GM12878 (cell line): ENCODE measurements at regions of chr19 and their contacts with region 1.

Region 1: DNA sequence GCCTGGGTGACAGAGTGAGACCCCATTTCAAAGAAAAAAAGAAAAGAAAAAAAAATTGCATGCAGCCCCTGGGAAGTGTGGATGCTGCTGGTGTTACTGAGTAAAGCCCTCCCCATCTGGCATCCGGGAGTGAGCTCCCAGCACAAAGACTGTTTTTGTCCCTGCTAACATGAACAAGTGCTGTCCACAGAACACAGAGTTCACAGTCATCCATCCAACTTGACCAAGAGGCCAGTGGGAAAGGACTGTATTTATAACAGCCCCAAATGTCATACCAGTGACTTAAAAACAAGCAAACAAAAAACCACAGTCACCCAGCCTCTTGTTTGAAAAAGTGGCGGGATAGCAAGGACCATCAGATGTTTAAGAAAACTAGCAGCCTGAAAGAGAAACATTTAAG is 10.8 kb downstream of the FBXO17 start:
- DNase-seq: no peak
- ATAC-seq: no peak
- H3K4me3 ChIP-seq: no peak overlapping the region
- H3K27ac ChIP-seq: no peak overlapping the region
- H3K4me1 ChIP-seq: no peaks in the 10 kb centered on the region
- H3K27me3 ChIP-seq: no peaks in the 10 kb centered on the region
- CTCF ChIP-seq: no peak
- EP300 ChIP-seq: no peak
- POLR2A ChIP-seq: no peak
- RAD21 ChIP-seq: no peak

Region 2: GRCh38 chr19:38851622-38852230 is 113.0 kb before region 1 on chr19:
- CTCF ChIA-PET with region 1: no interaction called
- POLR2A ChIA-PET with region 1: no interaction called
- RAD21 ChIA-PET with region 1: no interaction called
- SMC1A ChIA-PET with region 1: no interaction called
- in situ Hi-C with region 1: no loop called
- intact Hi-C with region 1: no loop called
- DNase-seq: no peak
- ATAC-seq: peak; percentile 28
- H3K4me3 ChIP-seq: peak overlapping the region; percentile 96
- H3K27ac ChIP-seq: peak overlapping the region; percentile 91
- H3K4me1 ChIP-seq: peaks cover 11% of the 10 kb centered on the region
- H3K27me3 ChIP-seq: no peaks in the 10 kb centered on the region
- CTCF ChIP-seq: no peak
- EP300 ChIP-seq: no peak
- POLR2A ChIP-seq: peak; percentile 77
- RAD21 ChIP-seq: no peak

Region 3: GRCh38 chr19:38899447-38900219 is 65.1 kb before region 1 on chr19 and contains the starts of genes NFKBIB and SIRT2:
- CTCF ChIA-PET with region 1: no interaction called
- POLR2A ChIA-PET with region 1: no interaction called
- RAD21 ChIA-PET with region 1: no interaction called
- SMC1A ChIA-PET with region 1: no interaction called
- in situ Hi-C with region 1: no loop called
- intact Hi-C with region 1: no loop called
- DNase-seq: peak; percentile 99
- ATAC-seq: peak; percentile 96
- H3K4me3 ChIP-seq: peak within 1 kb of the TSS; percentile 90
- H3K27ac ChIP-seq: peak within 1 kb of the TSS; percentile 75
- H3K4me1 ChIP-seq: peaks cover 5% of the 10 kb centered on the region
- H3K27me3 ChIP-seq: no peaks in the 10 kb centered on the region
- CTCF ChIP-seq: no peak
- EP300 ChIP-seq: no peak
- POLR2A ChIP-seq: peak; percentile 79
- RAD21 ChIP-seq: no peak
- polyA plus RNA-seq, gene NFKBIB: 1.2 to 4.3 TPM
- polyA plus RNA-seq, gene SIRT2: 1.4 to 5.1 TPM

Region 4: GRCh38 chr19:39031368-39032062 is 66.8 kb after region 1 on chr19:
- CTCF ChIA-PET with region 1: interaction called, 51 read pairs
- POLR2A ChIA-PET with region 1: interaction called, 10 read pairs
- RAD21 ChIA-PET with region 1: interaction called, 5 read pairs
- SMC1A ChIA-PET with region 1: interaction called, 33 read pairs
- in situ Hi-C with region 1: no loop called
- intact Hi-C with region 1: no loop called
- DNase-seq: peak; percentile 60
- ATAC-seq: peak; percentile 94
- H3K4me3 ChIP-seq: peak overlapping the region; percentile 72
- H3K27ac ChIP-seq: no peak overlapping the region
- H3K4me1 ChIP-seq: peaks cover 6% of the 10 kb centered on the region; the same call in 1 of the 2 replicates
- H3K27me3 ChIP-seq: no peaks in the 10 kb centered on the region
- CTCF ChIP-seq: no peak
- EP300 ChIP-seq: no peak
- POLR2A ChIP-seq: no peak; the same call in 1 of the 2 replicates
- RAD21 ChIP-seq: no peak

Region 5: DNA sequence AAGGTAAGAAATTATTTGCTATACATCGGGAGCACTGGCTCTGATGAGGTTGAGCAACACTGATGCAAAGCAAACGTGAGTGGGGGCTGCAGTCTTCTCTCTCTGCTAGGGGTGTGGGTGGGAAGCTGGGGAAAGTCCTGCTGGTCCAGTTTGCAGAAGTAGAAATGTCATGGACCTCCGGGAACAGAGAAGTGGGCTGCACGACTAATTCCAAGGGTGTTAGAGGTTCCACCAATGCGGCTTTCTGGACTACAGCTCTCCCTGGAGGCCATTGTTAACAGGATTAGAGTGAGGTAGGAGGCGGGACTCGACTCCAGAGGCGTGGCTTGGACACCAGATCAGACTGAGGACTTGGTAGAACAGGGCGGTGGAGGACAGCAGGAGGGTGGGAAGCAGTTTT is 73.4 kb after region 1 on chr19:
- CTCF ChIA-PET with region 1: interaction called, 51 read pairs
- POLR2A ChIA-PET with region 1: interaction called, 7 read pairs
- RAD21 ChIA-PET with region 1: interaction called, 30 read pairs
- SMC1A ChIA-PET with region 1: interaction called, 33 read pairs
- in situ Hi-C with region 1: no loop called
- intact Hi-C with region 1: loop called (anchors 2 kb)
- DNase-seq: no peak
- ATAC-seq: peak; percentile 88
- H3K4me3 ChIP-seq: no peak overlapping the region
- H3K27ac ChIP-seq: no peak overlapping the region
- H3K4me1 ChIP-seq: no peaks in the 10 kb centered on the region
- H3K27me3 ChIP-seq: no peaks in the 10 kb centered on the region
- CTCF ChIP-seq: peak in 1 of 3 experiments; percentile 42; a peak in 2 of 6 replicates
- EP300 ChIP-seq: no peak
- POLR2A ChIP-seq: no peak
- RAD21 ChIP-seq: peak; percentile 62

Region 6: GRCh38 chr19:39052243-39052746 is 87.6 kb after region 1 on chr19:
- CTCF ChIA-PET with region 1: interaction called, 12 read pairs
- POLR2A ChIA-PET with region 1: no interaction called
- RAD21 ChIA-PET with region 1: interaction called, 13 read pairs
- SMC1A ChIA-PET with region 1: interaction called, 5 read pairs
- in situ Hi-C with region 1: no loop called
- intact Hi-C with region 1: no loop called
- DNase-seq: no peak
- ATAC-seq: peak; percentile 97
- H3K4me3 ChIP-seq: no peak overlapping the region
- H3K27ac ChIP-seq: no peak overlapping the region
- H3K4me1 ChIP-seq: no peaks in the 10 kb centered on the region
- H3K27me3 ChIP-seq: no peaks in the 10 kb centered on the region; a peak in 1 of 4 replicates
- CTCF ChIP-seq: peak; percentile 59 to 93 (median 79)
- EP300 ChIP-seq: no peak
- POLR2A ChIP-seq: no peak
- RAD21 ChIP-seq: peak; percentile 53

Region 7: DNA sequence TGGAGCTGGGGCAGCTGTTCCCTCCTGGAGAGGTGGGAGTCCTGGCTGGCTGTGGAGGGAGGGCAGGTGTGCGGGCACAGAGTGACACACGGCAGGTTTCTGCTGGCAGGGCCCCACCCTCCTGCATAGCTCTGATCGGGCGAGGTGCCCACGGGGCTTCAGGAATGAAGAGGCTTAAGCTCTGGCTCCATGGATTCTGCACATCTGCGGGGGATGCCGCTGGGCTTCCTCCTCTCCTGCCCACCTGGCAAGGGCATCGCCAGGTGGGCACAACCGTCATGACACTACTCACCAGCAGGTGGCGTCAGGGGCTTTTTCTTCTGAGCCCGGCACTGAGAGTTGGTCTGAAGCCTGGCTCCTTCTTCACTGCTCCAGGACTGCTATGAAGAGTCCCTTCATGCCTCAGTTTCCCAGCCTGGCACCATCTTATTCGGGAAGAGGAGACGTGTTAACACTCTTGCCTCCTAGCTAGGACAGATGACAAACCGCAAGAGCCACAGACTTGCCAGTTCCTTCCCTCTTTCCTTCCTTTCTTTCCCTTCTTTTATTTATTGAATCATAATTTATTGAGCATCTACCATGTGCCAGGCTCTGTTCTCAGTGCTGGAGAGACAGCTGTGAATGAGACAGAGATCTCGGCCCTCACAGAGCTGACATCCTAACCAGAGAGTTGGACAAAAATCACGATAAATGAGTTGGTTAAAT is 145.7 kb after region 1 on chr19:
- CTCF ChIA-PET with region 1: interaction called, 20 read pairs
- POLR2A ChIA-PET with region 1: no interaction called
- RAD21 ChIA-PET with region 1: interaction called, 6 read pairs
- SMC1A ChIA-PET with region 1: interaction called, 3 read pairs
- in situ Hi-C with region 1: no loop called
- intact Hi-C with region 1: loop called (anchors 5 kb)
- DNase-seq: no peak
- ATAC-seq: peak; percentile 97
- H3K4me3 ChIP-seq: no peak overlapping the region
- H3K27ac ChIP-seq: no peak overlapping the region
- H3K4me1 ChIP-seq: no peaks in the 10 kb centered on the region
- H3K27me3 ChIP-seq: no peaks in the 10 kb centered on the region; a peak in 1 of 4 replicates
- CTCF ChIP-seq: peak; percentile 78 to 85 (median 84)
- EP300 ChIP-seq: no peak
- POLR2A ChIP-seq: no peak
- RAD21 ChIP-seq: peak; percentile 65

Region 8: DNA sequence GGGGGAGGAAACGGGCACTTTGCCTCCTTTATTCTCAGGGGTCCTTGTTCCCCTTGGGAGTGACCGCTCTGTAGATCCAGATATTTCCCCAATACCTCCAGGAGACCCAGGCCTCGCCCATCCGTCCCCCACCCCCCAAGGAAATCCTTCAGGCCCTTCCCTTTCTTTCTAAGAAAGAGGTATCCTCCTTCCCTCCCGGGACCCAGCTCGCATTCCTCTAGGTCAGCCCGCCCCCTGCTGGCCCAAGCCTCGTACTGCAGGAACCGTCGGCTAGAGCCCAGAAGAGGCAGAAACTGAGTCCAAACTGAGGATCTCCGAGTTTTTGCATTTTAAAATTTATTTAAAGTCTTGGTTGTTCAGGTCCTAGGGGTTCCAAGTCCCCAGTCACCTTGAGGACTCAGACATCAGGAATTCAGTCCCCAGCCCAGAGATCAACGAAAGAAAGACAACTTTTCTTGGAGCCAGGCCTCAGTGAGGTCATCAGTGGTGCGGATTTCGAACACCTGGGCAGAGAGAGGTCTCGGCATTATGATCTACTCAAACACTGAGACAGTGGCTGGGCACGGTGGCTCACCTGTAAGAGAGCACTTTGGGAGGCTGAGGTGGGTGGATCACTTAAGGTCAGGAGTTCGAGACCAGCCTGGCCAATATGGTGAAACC is 363.4 kb after region 1 on chr19:
- CTCF ChIA-PET with region 1: interaction called, 5 read pairs
- POLR2A ChIA-PET with region 1: no interaction called
- RAD21 ChIA-PET with region 1: no interaction called
- SMC1A ChIA-PET with region 1: no interaction called
- in situ Hi-C with region 1: no loop called
- intact Hi-C with region 1: loop called (anchors 5 kb)
- DNase-seq: no peak
- ATAC-seq: peak; percentile 80
- H3K4me3 ChIP-seq: no peak overlapping the region
- H3K27ac ChIP-seq: no peak overlapping the region
- H3K4me1 ChIP-seq: peaks cover 8% of the 10 kb centered on the region
- H3K27me3 ChIP-seq: no peaks in the 10 kb centered on the region
- CTCF ChIP-seq: peak; percentile 92 to 95 (median 92)
- EP300 ChIP-seq: no peak
- POLR2A ChIP-seq: no peak
- RAD21 ChIP-seq: peak; percentile 93